Sciatic nerve (tissue), 2 donors: ENCODE measurements at regions of chr1 and their contacts with region 1.

Region 1: GRCh38 chr1:20640183-20640597 is 6.9 kb downstream of the PINK1 start:
- DNase-seq: no peak
- ATAC-seq: peak; percentile 65

Region 2: DNA sequence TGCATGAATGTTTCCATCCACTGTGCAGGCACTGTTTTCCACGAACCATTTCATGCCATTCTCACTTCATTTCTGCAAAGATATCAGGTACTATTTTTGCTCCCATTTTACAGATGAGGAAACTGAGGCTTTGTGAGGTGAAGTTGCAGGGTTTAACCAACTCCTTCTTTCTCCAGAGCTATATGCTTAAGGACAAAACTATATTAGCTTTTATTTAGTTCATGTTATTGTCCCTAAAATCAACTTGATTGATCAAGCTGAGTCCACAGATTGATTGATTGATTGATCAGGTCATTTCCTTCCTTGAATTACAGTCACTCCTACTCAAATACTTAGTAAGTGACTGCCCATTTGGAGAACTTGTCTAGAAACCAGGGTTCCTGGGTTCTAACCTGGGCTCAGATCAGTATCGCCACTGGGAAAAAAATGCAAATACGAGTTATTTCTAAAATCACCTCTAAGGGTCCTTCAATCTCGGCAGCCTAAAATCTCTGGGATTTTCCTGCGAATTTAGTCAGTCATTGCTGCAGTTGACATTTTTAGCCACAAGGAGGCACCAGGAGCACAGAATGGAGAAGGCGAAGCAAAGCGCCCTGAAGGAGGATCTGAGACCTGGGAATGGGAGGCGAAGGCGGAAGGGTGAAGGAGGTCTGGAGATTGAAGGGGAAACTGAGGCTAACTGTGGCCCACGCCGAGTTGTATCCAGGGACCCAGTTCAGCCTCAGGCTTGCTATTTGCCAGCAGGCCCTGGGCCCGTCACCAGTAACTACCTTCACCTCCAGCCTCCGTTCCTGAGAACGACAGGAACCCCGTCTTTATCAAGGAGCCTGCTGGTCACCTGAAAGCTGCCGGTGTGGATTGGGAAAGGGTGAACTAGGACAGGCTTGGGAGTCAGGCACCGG is 118.0 kb before region 1 on chr1:
- intact Hi-C with region 1: loop called (anchors 10 kb)
- DNase-seq: peak; percentile 86
- ATAC-seq: peak; percentile 60

Region 3: DNA sequence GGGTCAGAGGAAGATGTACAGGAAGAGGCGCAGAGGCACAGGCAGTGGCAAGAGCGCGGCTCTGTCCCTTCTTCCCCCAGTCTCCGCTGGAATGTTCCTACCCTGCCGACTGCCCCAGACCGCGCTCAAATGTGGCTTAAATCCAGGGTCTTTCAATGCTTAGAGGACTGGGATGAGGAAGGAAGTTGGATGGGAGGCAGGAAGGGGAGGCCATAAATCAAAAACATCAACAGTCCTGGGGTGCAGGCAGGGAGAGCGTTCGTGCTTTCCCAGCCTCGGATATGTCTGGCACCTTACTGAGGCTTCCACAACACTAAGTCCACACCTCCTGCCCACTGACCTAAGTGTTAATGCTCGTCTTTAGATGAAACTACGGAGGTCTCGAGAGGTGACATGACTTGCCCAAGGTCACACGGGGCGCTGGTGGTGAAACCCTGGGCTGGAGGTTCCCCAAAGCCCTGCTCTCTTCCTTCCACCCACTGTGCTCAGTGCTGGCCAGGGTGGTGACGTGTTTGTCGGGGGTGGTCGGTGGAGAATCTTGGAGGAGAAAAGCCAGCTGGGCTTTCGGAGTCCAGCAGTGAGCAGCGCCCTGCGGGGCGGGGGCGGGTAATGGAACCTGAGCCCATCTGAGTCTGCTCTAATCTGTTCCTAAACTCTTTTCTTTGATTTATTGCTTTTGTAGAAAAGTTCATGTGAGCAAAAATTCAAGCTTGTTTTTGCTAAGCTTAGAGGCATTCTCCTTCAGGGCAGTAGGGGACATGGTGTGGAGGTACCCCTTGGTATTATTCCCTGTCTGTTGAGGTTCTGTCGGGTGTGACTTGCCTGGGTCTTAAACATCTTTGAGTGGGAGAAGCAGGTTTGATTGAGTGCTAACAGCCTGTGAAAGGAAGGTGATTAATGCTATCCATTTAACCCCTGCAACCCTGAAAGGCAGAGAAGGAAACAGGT is 50.6 kb before region 1 on chr1:
- intact Hi-C with region 1: no loop called
- DNase-seq: no peak
- ATAC-seq: peak; percentile 45

Region 4: GRCh38 chr1:20696397-20697329 is 56.5 kb after region 1 on chr1:
- intact Hi-C with region 1: no loop called
- DNase-seq: peak; percentile 90
- ATAC-seq: peak; percentile 97